ENCODE measurements at regions of chr11 and their contacts with region 1.

Region 1: GRCh38 chr11:93622043-93622442 is 39.4 kb upstream of the CEP295 start:
- DNase-seq: no peak
- H3K4me3 Mint-ChIP-seq: no peak overlapping the region
- H3K27ac Mint-ChIP-seq: no peak overlapping the region
- H3K4me1 Mint-ChIP-seq: no peaks in the 10 kb centered on the region
- H3K27me3 Mint-ChIP-seq: peaks cover 2% of the 10 kb centered on the region

Region 2: DNA sequence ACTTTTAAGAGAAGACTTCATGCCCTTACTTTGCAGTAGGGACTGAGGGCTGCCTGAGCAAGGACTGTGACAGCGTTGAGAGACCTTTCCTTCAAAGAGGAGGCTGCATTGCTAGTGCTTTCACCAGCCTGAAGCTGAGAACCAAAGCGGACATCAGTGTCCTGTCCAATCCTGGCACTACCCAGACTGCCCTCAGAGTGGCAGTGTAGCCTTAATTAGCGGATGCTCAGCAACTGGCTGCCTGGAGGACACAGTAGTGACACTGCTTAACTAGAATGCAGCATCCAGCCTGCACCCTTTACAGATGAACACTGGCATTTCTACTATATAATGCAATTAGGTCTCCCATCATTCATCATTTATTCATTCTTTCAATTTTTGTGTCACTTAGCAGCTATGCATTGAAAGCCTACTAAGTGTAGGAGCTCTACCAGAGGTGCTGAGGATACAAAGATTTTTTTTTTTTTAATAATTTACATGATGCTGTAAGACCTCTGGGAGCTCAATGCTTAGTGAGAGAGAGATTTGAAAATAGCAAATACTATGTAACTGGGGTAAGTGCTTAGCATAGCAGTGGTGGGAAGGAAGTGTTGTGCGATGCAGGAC is 387.3 kb before region 1 on chr11:
- CTCF ChIA-PET with region 1: no interaction called
- intact Hi-C with region 1: loop called (anchors 1 kb)
- DNase-seq: peak; percentile 84
- H3K4me3 Mint-ChIP-seq: no peak overlapping the region
- H3K27ac Mint-ChIP-seq: no peak overlapping the region
- H3K4me1 Mint-ChIP-seq: no peaks in the 10 kb centered on the region
- H3K27me3 Mint-ChIP-seq: peaks cover 21% of the 10 kb centered on the region

Region 3: DNA sequence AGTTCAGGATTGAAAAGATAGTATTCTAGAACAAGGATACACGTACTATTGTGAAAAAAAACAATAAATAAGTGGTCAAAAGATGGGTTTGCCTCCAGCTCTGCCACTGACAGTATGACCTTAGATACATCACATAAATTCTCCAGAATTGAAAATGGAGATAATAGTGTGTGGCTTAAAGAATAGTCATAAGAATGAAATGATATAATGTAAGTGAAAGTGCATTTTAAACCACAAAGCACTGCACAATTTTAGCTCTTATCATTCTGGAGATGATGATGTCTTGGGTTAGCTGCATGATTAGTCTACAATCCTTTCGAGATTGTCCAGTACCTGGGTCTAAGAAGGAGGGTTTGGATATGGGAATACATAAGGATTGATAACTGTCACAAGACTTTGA is 17.5 kb after region 1 on chr11:
- CTCF ChIA-PET with region 1: no interaction called
- intact Hi-C with region 1: no loop called
- DNase-seq: no peak
- H3K4me3 Mint-ChIP-seq: no peak overlapping the region
- H3K27ac Mint-ChIP-seq: no peak overlapping the region
- H3K4me1 Mint-ChIP-seq: peaks cover 3% of the 10 kb centered on the region
- H3K27me3 Mint-ChIP-seq: peaks cover 7% of the 10 kb centered on the region

Measured in activated naive CD4-positive, alpha-beta T cell treated with anti-CD3 and anti-CD28 coated beads for 36 hours (primary cell).